CD8-positive, alpha-beta T cell (primary cell): ENCODE measurements at regions of chr1 and their contacts with region 1.

Region 1: DNA sequence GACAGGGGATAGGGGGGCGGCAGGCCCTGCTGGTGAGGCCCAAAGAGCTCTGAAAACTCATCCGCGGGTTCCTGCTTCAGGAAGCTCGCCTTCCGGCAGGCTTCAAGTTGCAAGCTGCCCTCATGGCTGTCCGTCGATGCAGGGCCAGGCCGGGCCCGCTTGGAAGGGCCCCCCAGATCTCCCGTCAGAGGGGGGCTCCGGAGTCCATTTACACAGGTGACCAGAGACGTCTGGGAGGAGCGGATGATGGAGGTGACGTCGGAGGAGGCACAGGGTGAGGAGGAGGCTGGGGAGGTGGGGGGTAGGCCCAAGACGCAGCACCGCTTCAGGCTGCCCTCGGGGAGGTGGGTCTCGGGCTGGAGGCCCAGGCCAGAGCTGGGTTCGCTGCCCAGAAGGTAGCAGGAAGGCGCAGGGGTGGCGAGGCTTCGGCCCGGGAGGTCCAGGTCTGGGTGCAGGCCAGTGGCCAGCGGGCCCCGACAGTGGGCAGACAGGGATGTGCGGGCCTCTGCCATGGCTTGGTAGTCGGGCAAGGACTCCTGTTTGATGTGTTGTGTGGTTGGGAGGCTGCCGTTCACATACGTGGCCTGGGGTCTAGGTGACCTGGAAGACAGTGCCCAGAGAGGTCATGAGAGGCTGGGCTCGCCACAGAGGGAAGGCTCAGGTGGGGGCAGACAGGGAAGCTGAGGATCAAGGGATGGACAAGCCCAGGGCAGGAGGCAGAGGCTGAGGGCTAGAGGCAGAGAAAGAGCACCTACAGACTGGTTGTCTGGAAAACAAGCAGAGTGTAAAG is 135.4 kb downstream of the DMRTB1 start:
- DNase-seq: no peak
- ATAC-seq: no peak
- H3K4me3 ChIP-seq: no peak overlapping the region
- H3K4me3 Mint-ChIP-seq: no peak overlapping the region
- H3K27ac ChIP-seq: no peak overlapping the region
- H3K27ac Mint-ChIP-seq: no peak overlapping the region
- H3K4me1 ChIP-seq: no peaks in the 10 kb centered on the region
- H3K4me1 Mint-ChIP-seq: no peaks in the 10 kb centered on the region
- H3K27me3 ChIP-seq: no peaks in the 10 kb centered on the region
- H3K27me3 Mint-ChIP-seq: no peaks in the 10 kb centered on the region
- CTCF ChIP-seq: no peak

Region 2: DNA sequence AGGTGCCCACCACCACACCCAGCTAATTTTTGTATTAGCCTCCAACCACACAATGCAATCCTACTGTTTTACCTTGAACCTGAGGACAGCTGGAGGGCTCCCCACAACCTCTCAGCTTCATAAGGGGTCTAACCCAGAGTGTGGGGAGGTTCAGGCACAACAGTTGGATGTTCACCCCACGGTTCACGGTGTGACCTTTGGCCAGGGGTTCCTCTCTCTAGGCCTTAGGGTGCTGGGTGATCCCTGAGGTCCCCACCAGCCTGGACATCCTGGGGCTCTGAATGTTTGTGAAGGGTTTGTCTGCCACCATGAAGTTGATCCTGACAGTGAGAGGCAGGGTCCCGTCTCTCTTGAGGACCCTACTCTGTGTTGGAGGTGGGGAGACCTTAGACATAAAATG is 957.3 kb after region 1 on chr1:
- CTCF ChIA-PET with region 1: no interaction called
- POLR2A ChIA-PET with region 1: no interaction called
- intact Hi-C with region 1: loop called in 1 of 2 experiments (anchors 5 kb)
- DNase-seq: no peak
- ATAC-seq: no peak
- H3K4me3 ChIP-seq: no peak overlapping the region
- H3K4me3 Mint-ChIP-seq: no peak overlapping the region
- H3K27ac ChIP-seq: no peak overlapping the region
- H3K27ac Mint-ChIP-seq: no peak overlapping the region
- H3K4me1 ChIP-seq: no peaks in the 10 kb centered on the region
- H3K4me1 Mint-ChIP-seq: no peaks in the 10 kb centered on the region
- H3K27me3 ChIP-seq: no peaks in the 10 kb centered on the region
- H3K27me3 Mint-ChIP-seq: peaks cover 3% of the 10 kb centered on the region
- CTCF ChIP-seq: no peak